Mucosa of descending colon (tissue), 3 donors: ENCODE measurements at regions of chr17 and their contacts with region 1.

Region 1: DNA sequence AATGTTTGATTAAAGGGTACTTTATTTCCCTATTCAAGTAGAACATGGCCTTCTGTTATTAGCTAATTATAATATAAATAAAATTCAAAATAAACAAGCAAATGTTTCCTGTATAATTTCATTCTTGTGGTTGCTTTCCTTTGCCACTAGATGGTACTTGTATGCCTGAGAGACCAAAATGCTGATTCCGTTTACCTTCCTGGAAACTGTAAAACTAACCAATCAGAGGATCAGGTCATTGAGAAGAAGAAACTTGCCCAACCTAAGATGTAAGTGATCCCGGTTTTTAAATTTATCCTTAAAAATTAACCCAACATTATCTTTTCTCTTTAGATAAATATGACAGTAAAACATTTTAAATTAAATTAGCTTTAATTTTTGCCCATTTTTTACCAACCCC is 8.1 kb upstream of the ABCA5 start:
- DNase-seq: no peak
- ATAC-seq: peak; percentile 68
- H3K4me3 ChIP-seq: no peak overlapping the region
- H3K4me1 ChIP-seq: no peaks in the 10 kb centered on the region
- CTCF ChIP-seq: peak; percentile 20

Region 2: DNA sequence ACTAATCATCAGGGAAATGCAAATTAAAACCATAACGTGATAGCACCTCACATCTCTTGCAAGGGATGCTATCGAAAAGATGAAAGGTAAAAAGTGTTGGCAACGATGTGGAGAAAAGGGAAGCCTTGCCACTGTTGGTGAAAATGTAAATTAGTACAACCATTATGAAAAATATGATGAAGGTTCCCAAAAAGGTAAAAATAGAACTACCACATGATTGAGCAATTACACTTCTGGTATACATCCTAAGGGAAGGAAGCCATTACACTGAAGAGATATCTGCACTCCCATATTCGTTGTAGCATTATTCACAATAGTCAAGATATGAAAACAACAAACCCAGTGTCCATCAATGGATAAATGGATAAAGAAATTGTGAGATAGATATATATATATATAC is 127.9 kb before region 1 on chr17:
- intact Hi-C with region 1: no loop called
- DNase-seq: no peak
- ATAC-seq: no peak
- H3K4me3 ChIP-seq: no peak overlapping the region
- H3K4me1 ChIP-seq: no peaks in the 10 kb centered on the region
- CTCF ChIP-seq: no peak

Region 3: DNA sequence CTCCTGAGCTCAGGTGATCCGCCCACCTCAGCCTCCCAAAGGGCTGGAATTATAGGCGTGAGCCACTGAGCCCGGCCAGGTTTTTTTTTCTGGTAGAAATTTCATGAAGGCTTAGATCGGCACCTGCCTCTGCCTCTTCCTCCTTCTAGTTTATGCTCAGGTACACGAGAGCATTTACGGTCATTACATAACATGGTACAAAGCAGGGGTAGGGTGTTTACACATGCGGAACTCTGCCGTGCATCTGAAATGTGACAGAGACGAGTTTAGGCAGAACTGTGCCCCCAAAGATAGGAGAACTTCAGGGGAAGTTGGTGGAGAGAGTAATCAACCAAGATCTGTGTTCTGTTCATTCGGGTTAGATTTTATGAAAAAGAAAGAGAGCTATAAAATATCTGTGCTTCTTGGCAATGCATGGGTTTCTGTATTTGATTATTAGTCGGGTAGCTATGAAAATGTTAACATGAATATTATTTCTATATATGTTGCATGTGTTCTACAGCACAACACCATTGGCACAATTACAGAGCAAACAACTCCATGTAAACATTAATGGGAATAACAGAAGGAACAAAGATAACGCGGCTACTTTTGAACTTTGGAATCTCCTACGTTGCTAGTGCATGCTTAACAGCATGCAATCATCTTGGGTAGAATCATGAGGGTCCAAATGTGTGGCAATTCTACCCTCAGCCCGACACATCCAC is 55.9 kb after region 1 on chr17:
- intact Hi-C with region 1: loop called in 1 of 2 experiments (anchors 10 kb)
- DNase-seq: peak in 2 of 3 donors; percentile 37 to 39
- ATAC-seq: peak; percentile 79
- H3K4me3 ChIP-seq: no peak overlapping the region
- H3K4me1 ChIP-seq: no peaks in the 10 kb centered on the region
- CTCF ChIP-seq: no peak

Region 4: DNA sequence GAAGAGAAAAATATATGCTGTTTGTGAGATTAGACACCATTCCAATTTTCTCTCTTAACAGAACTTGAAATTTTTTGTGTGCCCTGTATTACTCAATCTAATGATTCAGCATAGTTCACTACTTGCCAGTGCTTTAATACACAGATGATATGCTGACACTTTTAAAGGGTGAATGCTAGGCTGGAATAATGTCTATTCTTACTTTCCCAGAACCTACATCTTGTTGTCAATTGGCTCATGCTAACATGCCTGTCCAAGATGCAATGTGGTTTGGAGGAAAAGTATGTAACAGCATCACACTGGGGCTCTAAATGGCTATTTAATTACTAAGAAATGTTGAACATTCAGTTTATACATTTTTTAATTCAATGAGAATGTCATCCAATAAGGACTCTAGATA is 71.9 kb after region 1 on chr17:
- intact Hi-C with region 1: no loop called
- DNase-seq: no peak
- ATAC-seq: no peak
- H3K4me3 ChIP-seq: no peak overlapping the region
- H3K4me1 ChIP-seq: no peaks in the 10 kb centered on the region
- CTCF ChIP-seq: no peak

Region 5: GRCh38 chr17:69523244-69523861 is 188.3 kb after region 1 on chr17:
- intact Hi-C with region 1: loop called (anchors 10 kb)
- DNase-seq: peak in 1 of 3 donors; percentile 64
- ATAC-seq: peak; percentile 84
- H3K4me3 ChIP-seq: no peak overlapping the region
- H3K4me1 ChIP-seq: no peaks in the 10 kb centered on the region
- CTCF ChIP-seq: no peak